Activated B cell treated with CpG ODN at 0.5 μM for 24 hours (primary cell): ENCODE measurements at regions of chr6 and their contacts with region 1.

Region 1: DNA sequence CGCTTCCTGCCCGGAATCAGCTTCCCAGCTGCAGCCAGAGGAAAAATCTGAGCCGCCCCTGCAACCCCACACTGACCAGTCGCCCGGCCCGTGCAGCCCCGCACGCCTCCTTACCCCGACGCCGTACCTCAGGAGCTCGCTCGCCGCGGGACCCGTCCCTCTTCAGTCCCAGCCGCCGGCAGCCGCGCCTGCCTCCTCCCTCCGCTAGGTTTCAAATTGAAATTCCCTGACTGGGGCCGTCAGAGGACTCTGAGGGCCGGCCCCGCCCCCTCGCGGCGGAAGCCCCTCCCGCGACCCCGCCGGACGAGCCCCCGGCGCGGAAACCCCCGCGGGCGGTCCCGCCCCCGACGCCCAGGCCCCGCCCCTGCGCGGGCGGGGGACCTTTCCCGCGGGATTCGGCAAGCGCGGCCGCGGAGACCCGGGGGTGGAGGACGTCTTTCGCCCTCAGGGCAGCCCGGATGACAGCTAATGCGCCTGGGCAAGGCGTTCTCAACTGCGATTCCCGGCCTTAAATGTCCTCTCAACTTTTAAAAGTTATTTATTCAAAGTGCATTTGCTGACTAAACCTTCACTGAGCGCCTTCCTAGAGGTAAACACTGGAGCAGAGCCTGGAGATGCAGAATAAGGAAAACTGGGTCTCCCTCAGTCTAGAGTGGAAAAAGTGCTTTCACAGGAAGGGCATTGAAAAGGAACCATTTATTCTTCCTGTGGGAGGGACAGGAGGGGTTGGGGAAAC is at the start of gene EPB41L2:
- DNase-seq: peak; percentile 95
- ATAC-seq: peak; percentile 90
- H3K4me3 Mint-ChIP-seq: peak within 1 kb of the TSS; percentile 89
- H3K27ac Mint-ChIP-seq: peak within 1 kb of the TSS; percentile 71
- H3K4me1 Mint-ChIP-seq: peaks cover 37% of the 10 kb centered on the region
- H3K27me3 Mint-ChIP-seq: no peaks in the 10 kb centered on the region
- CTCF ChIP-seq: no peak
- total RNA-seq, gene EPB41L2: 62.7 and 62.8 TPM in 2 replicates

Region 2: GRCh38 chr6:130020907-130021629 is 1042.1 kb before region 1 on chr6:
- CTCF ChIA-PET with region 1: no interaction called
- POLR2A ChIA-PET with region 1: no interaction called
- intact Hi-C with region 1: loop called (anchors 5 kb)
- DNase-seq: peak; percentile 50
- ATAC-seq: peak; percentile 58
- H3K4me3 Mint-ChIP-seq: peak overlapping the region; percentile 97
- H3K27ac Mint-ChIP-seq: peak overlapping the region; percentile 96
- H3K4me1 Mint-ChIP-seq: peaks cover 25% of the 10 kb centered on the region
- H3K27me3 Mint-ChIP-seq: no peaks in the 10 kb centered on the region
- CTCF ChIP-seq: peak; percentile 29

Region 3: DNA sequence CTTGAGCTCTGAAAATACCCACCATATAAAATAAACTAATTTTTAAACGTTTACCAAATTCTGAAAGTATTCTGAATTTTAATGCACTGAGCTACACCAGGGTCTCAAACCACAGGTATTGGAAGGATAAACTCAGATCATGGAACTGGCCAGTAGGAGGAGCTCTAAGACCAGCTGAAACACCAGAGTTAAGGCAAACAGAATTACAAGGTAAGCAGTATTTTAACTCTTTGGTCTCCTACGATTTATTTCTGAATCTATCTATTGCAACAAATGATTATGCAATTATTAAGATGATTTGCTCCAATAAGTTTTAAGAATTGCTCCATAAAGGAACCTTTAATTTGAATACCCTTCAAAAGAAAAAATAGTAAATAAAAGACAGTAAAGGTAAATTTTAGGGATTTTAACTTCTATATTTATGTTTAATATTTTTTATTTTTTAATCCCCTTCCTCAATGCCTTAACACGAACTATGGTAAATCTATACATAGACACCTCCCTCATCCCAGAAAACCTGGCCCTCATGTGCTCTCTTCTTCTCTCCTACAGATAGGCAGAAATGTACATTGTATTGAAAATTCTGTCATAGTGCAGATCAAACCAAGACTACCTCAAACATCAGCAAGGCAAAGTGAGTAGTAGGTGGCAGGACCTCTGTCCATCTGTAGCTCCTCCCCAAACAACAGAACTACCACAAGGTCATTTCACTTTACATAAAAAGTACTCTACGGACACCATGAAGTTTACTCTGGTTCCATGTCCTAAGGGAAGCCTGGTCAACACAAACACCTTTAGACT is 177.6 kb before region 1 on chr6:
- CTCF ChIA-PET with region 1: interaction called, 3 read pairs
- POLR2A ChIA-PET with region 1: no interaction called
- intact Hi-C with region 1: loop called (anchors 2 kb)
- DNase-seq: no peak
- ATAC-seq: peak; percentile 81
- H3K4me3 Mint-ChIP-seq: no peak overlapping the region
- H3K27ac Mint-ChIP-seq: no peak overlapping the region
- H3K4me1 Mint-ChIP-seq: no peaks in the 10 kb centered on the region
- H3K27me3 Mint-ChIP-seq: no peaks in the 10 kb centered on the region
- CTCF ChIP-seq: peak; percentile 30

Region 4: GRCh38 chr6:131048933-131049515 is 14.2 kb before region 1 on chr6:
- CTCF ChIA-PET with region 1: no interaction called
- POLR2A ChIA-PET with region 1: no interaction called
- intact Hi-C with region 1: no loop called
- DNase-seq: no peak
- ATAC-seq: no peak
- H3K4me3 Mint-ChIP-seq: no peak overlapping the region
- H3K27ac Mint-ChIP-seq: no peak overlapping the region
- H3K4me1 Mint-ChIP-seq: no peaks in the 10 kb centered on the region
- H3K27me3 Mint-ChIP-seq: no peaks in the 10 kb centered on the region
- CTCF ChIP-seq: no peak

Region 5: GRCh38 chr6:131084982-131085381 is 21.8 kb after region 1 on chr6:
- CTCF ChIA-PET with region 1: no interaction called
- POLR2A ChIA-PET with region 1: no interaction called
- intact Hi-C with region 1: loop called (anchors 2 kb)
- DNase-seq: no peak
- ATAC-seq: no peak
- H3K4me3 Mint-ChIP-seq: no peak overlapping the region
- H3K27ac Mint-ChIP-seq: no peak overlapping the region
- H3K4me1 Mint-ChIP-seq: peaks cover 12% of the 10 kb centered on the region
- H3K27me3 Mint-ChIP-seq: no peaks in the 10 kb centered on the region
- CTCF ChIP-seq: no peak

Region 6: DNA sequence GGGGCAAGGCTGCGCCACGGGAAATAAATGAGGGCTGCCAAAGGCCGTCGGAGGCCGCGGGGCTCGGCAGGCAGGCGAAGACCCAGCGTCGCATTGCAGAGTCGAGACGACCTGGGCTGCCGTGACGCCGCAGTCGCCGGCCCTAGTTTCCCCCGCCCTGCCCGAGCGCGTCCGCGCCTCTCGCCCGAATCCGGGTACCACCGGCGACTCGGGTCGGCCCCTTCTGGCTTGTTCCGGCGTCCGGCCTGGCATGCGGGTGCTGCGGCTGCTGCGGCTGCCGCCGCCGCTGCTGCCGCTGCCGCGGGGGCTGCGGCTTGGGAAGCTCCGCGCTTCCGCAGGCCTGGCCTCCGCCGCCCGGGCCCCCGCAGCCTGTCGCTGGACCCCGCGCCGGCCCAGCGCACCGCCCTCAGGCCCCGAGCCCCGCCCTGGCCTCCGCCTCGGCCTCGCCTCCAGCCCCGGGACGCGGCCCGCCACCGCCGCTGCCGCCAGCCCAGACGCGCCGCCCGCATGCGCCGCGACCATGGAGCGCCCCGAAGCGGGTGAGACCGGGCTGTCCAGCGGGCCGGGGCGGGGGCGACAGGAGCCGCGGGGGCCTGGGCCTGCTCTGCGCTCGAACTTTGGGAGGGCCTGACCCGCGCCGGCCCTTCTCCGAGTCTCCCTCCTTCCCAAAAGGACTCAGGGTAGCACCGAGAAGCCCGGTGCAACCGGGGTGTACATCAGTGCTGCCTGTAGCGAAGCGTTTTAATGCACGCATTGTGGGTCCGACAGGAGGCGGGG is 72.2 kb after region 1 on chr6 and contains the start of gene AKAP7:
- CTCF ChIA-PET with region 1: no interaction called
- POLR2A ChIA-PET with region 1: no interaction called
- intact Hi-C with region 1: loop called (anchors 1 kb)
- DNase-seq: peak; percentile 68
- ATAC-seq: peak; percentile 76
- H3K4me3 Mint-ChIP-seq: peak within 1 kb of the TSS; percentile 96
- H3K27ac Mint-ChIP-seq: peak within 1 kb of the TSS; percentile 95
- H3K4me1 Mint-ChIP-seq: peaks cover 26% of the 10 kb centered on the region
- H3K27me3 Mint-ChIP-seq: no peaks in the 10 kb centered on the region
- CTCF ChIP-seq: no peak
- total RNA-seq, gene AKAP7: 4.1 TPM in 2 replicates

Region 7: GRCh38 chr6:131303338-131303954 is 240.2 kb after region 1 on chr6:
- CTCF ChIA-PET with region 1: no interaction called
- POLR2A ChIA-PET with region 1: no interaction called
- intact Hi-C with region 1: no loop called
- DNase-seq: no peak
- ATAC-seq: no peak
- H3K4me3 Mint-ChIP-seq: no peak overlapping the region
- H3K27ac Mint-ChIP-seq: no peak overlapping the region
- H3K4me1 Mint-ChIP-seq: peaks cover 3% of the 10 kb centered on the region
- H3K27me3 Mint-ChIP-seq: no peaks in the 10 kb centered on the region
- CTCF ChIP-seq: no peak

Region 8: DNA sequence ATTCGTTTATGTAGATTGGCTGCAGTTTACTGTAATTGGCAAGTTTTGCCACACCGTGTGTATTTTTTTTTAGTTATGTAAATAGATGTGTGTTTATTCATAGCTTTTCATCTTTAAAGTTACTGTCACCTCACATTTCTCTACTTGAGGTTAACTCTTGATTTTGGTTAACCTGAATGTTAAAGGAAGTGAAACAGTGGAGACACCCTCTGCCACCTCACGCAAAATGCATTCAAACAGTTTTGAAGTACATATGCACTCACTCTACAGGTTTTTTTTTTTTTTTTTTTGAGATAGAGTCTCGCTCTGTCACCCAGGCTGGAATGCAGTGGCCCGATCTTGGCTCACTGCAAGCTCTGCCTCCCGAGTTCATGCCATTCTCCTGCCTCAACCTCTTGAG is 620.3 kb after region 1 on chr6:
- CTCF ChIA-PET with region 1: no interaction called
- POLR2A ChIA-PET with region 1: no interaction called
- intact Hi-C with region 1: loop called (anchors 10 kb)
- DNase-seq: no peak
- ATAC-seq: peak; percentile 67
- H3K4me3 Mint-ChIP-seq: peak overlapping the region; percentile 69
- H3K27ac Mint-ChIP-seq: peak overlapping the region; percentile 86
- H3K4me1 Mint-ChIP-seq: peaks cover 60% of the 10 kb centered on the region
- H3K27me3 Mint-ChIP-seq: no peaks in the 10 kb centered on the region
- CTCF ChIP-seq: no peak